ENCODE measurements at regions of chr14 and their contacts with region 1.

Region 1: DNA sequence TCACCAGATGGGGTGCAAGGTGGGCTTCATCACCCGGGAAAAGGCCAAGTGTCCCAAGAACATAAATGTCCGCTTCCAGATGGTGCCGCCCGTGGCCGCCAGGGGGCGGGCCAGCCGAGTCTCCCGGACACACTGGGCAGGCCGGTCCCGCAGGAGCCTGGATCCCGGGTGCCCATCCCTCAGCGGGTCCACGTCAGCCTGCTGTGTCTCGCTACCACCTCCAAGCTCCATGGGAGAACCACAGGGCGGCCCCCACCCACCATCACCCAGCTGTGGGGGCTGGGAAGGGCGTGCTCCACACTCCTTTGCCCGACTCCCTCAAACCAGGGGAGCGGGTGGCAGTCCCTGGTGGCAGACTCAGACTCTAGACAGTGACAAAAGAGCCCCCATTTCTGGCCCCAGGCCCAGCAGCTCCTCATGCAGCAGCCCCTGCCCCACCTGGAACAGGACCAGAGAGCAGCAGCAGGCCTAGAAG is 22.0 kb upstream of the NUDT14 start:
- DNase-seq: peak; percentile 60
- H3K4me3 ChIP-seq: no peak overlapping the region
- H3K27ac ChIP-seq: no peak overlapping the region
- H3K4me1 ChIP-seq: no peaks in the 10 kb centered on the region
- CTCF ChIP-seq: peak; percentile 93

Region 2: DNA sequence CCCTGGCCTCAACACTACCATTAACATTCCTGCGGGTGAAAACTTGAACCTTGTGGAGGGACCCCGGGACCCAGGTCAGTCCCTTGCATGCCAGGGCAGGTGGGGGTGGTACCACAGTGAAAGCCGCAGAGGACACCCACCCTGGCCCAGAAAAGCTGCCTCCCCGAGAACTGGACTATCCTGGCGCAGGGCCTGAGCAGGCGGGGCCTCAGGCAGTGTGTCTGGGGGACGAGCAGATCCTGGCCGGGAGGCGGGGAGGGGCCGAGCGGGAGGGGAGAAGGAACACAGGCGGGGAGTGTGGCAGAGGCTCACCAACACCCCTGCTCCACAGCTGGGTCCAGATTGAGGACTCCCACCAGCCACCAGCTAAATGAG is 235.0 kb before region 1 on chr14:
- CTCF ChIA-PET with region 1: no interaction called
- POLR2A ChIA-PET with region 1: no interaction called
- intact Hi-C with region 1: no loop called
- DNase-seq: no peak
- H3K4me3 ChIP-seq: peak overlapping the region; percentile 28
- H3K27ac ChIP-seq: no peak overlapping the region
- H3K4me1 ChIP-seq: peaks cover 19% of the 10 kb centered on the region
- CTCF ChIP-seq: no peak

Region 3: GRCh38 chr14:105168979-105169507 is 34.1 kb before region 1 on chr14:
- CTCF ChIA-PET with region 1: no interaction called
- POLR2A ChIA-PET with region 1: no interaction called
- intact Hi-C with region 1: no loop called
- DNase-seq: peak; percentile 55
- H3K4me3 ChIP-seq: peak overlapping the region; percentile 62
- H3K27ac ChIP-seq: no peak overlapping the region
- H3K4me1 ChIP-seq: peaks cover 41% of the 10 kb centered on the region
- CTCF ChIP-seq: peak; percentile 82

Region 4: DNA sequence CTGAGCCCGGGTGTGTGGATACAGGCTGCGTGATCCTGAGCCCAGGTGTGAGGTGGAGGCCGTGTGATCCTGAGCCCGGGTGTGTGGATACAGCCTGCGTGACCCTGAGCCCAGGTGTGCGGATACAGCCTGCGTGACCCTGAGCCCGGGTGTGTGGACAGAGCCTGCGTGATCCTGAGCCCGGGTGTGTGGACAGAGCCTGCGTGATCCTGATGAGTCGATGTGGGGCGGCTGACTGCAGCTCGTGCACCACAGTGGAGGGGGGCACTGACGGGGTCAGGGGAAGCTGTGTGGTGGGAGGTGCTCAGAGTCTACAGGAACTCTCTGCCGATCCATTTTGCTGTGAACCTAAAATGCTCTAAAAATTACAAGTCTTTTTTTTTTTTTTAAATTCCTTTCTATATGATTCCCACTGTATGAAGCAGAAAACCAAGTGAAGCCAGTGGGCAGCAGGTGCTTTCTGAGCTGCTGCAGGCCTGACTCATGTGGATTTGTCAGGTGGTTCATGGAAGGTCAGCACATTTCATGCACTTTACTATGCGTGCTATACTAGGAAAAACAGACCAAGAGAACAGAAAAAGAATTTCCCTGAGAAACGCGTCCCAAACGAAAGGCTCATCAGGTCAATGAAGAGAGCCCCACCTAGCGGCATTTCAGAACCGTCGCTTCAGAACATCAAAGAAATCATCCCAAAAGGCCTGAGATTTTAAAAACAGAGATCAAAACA is 78.4 kb after region 1 on chr14:
- CTCF ChIA-PET with region 1: no interaction called
- POLR2A ChIA-PET with region 1: no interaction called
- intact Hi-C with region 1: loop called (anchors 2 kb)
- DNase-seq: peak; percentile 71
- H3K4me3 ChIP-seq: no peak overlapping the region
- H3K27ac ChIP-seq: no peak overlapping the region
- H3K4me1 ChIP-seq: no peaks in the 10 kb centered on the region
- CTCF ChIP-seq: peak; percentile 93